A673 (cell line): ENCODE measurements at regions of chr1 and their contacts with region 1.

Region 1: GRCh38 chr1:24111996-24112779 is at the start of gene MYOM3:
- DNase-seq: peak; percentile 58
- H3K4me3 ChIP-seq: peak within 1 kb of the TSS; percentile 9
- H3K27ac ChIP-seq: no peak within 1 kb of the TSS
- H3K4me1 ChIP-seq: no peaks in the 10 kb centered on the region
- H3K27me3 ChIP-seq: no peaks in the 10 kb centered on the region
- CTCF ChIP-seq: peak; percentile 61
- total RNA-seq, gene MYOM3: not detected in 2 replicates

Region 2: GRCh38 chr1:23657659-23658275 is 454.4 kb before region 1 on chr1:
- CTCF ChIA-PET with region 1: no interaction called
- POLR2A ChIA-PET with region 1: no interaction called
- intact Hi-C with region 1: no loop called
- DNase-seq: peak; percentile 64
- H3K4me3 ChIP-seq: no peak overlapping the region
- H3K27ac ChIP-seq: no peak overlapping the region
- H3K4me1 ChIP-seq: no peaks in the 10 kb centered on the region
- H3K27me3 ChIP-seq: no peaks in the 10 kb centered on the region
- CTCF ChIP-seq: peak; percentile 92

Region 3: DNA sequence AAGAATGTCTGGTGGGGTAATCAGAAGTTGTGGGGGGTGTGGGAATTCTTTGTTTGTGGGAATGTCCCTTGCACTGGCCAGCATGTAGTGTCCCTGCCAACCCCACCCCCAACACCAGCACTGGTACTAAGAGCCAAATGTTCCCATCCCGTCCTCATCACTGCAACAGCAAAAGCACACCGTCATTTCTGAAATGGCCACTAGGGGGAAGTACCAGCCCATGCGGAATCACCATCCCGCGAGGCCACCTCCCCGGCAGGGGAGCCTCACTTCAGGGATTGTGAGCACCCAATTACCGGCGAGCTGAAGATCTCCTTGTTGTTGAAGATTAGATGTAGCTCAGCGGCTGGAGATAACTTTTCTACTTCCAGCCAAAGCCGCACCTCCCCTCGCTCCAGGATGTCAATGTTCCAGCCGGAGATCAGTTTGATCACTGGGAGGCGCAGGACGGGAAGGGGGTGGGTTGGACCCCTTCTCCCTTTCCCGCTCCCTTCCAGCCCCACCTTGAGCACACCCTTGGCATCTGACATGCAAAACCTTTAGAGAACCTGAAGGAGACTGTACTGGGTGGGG is 41.3 kb before region 1 on chr1:
- CTCF ChIA-PET with region 1: interaction called, 3 read pairs
- POLR2A ChIA-PET with region 1: no interaction called
- intact Hi-C with region 1: loop called (anchors 2 kb)
- DNase-seq: peak; percentile 88
- H3K4me3 ChIP-seq: no peak overlapping the region
- H3K27ac ChIP-seq: no peak overlapping the region
- H3K4me1 ChIP-seq: no peaks in the 10 kb centered on the region
- H3K27me3 ChIP-seq: no peaks in the 10 kb centered on the region
- CTCF ChIP-seq: peak; percentile 95